Endothelial cell of umbilical vein (primary cell): ENCODE measurements at regions of chr18 and their contacts with region 1.

Region 1: DNA sequence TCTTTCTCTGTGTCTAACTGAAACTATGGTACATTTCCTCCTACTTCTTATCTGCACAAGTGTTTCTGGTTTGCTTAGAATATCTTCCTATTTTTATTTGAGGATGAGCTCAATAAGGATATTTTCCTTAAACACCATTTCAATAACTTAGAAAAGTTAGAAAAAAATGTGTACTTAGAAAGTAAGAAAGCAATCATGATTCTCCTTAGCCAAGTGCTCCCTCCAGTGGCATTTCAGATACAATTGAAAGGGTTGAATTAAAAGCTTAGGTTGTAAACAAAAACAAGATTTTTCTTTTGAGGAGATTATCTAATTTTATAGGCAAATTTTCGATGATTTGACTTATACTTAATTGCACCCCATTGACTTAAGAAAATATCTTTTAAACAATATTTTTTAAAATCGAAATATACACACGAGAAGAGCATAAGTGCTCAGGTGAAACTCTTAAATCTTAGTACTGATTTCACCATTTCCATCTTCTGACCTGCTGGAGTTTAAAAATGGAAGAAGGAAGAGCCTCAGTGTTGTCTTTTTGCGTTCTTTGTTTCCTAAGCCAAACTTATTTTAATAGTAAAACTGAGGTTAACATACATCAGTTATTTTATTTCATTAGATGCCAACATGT is 26.9 kb downstream of the C18orf63 start:
- DNase-seq: peak; percentile 67
- H3K4me3 ChIP-seq: no peak overlapping the region
- H3K27ac ChIP-seq: no peak overlapping the region
- H3K4me1 ChIP-seq: no peaks in the 10 kb centered on the region
- H3K27me3 ChIP-seq: peaks cover 0 to 7% of the 10 kb centered on the region in 2 experiments
- CTCF ChIP-seq: peak; percentile 24 to 25
- POLR2A ChIP-seq: no peak

Region 2: GRCh38 chr18:74081966-74082741 is 260.4 kb before region 1 on chr18:
- CTCF ChIA-PET with region 1: no interaction called
- POLR2A ChIA-PET with region 1: no interaction called
- dilution Hi-C with region 1: no loop called
- intact Hi-C with region 1: loop called (anchors 1 kb)
- DNase-seq: no peak
- H3K4me3 ChIP-seq: no peak overlapping the region
- H3K27ac ChIP-seq: no peak overlapping the region
- H3K4me1 ChIP-seq: no peaks in the 10 kb centered on the region
- H3K27me3 ChIP-seq: no peaks in the 10 kb centered on the region
- CTCF ChIP-seq: no peak
- POLR2A ChIP-seq: no peak

Region 3: GRCh38 chr18:74242438-74243096 is 100.0 kb before region 1 on chr18:
- CTCF ChIA-PET with region 1: interaction called, 17 read pairs
- POLR2A ChIA-PET with region 1: no interaction called
- dilution Hi-C with region 1: no loop called
- intact Hi-C with region 1: loop called (anchors 1 kb)
- DNase-seq: no peak
- H3K4me3 ChIP-seq: no peak overlapping the region
- H3K27ac ChIP-seq: no peak overlapping the region
- H3K4me1 ChIP-seq: no peaks in the 10 kb centered on the region
- H3K27me3 ChIP-seq: no peaks in the 10 kb centered on the region
- CTCF ChIP-seq: no peak
- POLR2A ChIP-seq: no peak

Region 4: DNA sequence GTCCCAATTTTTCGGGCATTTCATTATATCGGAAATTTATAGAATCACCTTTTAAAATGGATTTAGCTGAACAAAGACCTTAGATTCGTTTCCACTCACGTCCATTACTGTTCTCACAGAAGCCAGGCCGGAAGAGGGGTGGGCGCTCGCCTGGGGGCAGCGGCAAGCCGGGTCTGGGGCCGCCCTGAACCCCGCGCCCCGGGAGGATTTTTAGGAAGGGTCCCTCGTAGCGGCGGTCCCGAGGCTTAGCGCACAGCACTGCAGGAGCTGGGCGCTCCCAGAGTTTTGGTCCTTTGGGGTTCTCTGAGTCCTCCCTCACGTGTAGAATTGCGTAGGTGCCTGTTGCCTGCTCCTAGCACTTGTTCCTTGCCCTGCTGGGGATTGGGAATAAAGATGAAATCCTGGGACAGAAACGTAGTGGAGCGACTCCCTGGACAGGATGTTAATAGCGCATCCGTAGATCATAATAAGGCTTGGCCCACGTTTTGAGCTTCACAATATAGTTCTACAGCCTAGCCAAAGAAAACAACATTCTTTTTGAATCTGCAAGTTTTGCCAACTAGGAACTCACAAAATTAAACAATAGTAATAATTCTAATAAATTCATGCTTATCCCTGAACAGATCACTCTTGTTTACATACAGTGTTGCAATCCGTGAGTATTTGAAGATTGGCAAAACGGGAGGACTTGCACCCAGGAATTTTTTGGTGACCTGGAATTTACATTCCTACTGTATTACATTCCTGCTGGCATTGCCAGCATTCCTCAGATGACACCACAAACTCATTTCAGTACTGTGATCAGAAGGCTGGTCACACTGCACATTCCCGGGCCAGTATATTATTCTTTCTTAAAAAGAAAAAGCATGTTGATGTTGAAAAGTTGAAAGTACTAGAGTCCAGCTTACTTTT is 26.0 kb before region 1 on chr18:
- CTCF ChIA-PET with region 1: interaction called, 18 read pairs
- POLR2A ChIA-PET with region 1: no interaction called
- dilution Hi-C with region 1: no loop called
- intact Hi-C with region 1: no loop called
- DNase-seq: no peak
- H3K4me3 ChIP-seq: no peak overlapping the region
- H3K27ac ChIP-seq: no peak overlapping the region
- H3K4me1 ChIP-seq: no peaks in the 10 kb centered on the region
- H3K27me3 ChIP-seq: no peaks in the 10 kb centered on the region
- CTCF ChIP-seq: no peak
- POLR2A ChIP-seq: no peak

Region 5: DNA sequence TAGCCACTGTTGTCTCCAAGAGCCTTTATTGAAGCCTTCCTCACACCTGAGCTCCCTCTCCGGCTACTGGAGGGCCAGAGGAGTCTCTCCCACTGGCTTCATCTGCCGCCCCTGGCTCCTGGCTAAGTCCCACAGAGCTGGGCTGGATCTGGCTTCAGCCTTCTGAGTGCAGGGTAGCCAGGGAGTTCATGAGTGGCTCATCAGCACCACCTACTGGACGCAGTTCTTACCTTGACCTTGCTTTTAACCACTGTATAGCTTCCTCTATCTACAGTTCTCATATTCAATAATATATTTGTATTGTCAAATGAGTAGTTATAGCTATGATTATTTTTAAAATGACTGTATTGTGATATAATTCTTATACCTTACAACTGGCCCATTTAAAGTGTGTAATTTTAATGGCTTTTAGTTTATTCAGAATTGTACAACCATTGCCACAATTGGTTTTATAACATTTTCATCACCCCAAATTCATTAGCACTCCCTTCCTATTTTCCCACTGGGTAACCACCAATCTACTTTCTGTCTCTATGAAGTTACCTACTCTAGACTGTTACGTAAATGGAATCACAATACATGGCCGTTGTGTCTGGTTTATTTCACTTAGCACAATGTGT is 209.5 kb after region 1 on chr18:
- CTCF ChIA-PET with region 1: interaction called, 25 read pairs
- POLR2A ChIA-PET with region 1: no interaction called
- dilution Hi-C with region 1: no loop called
- intact Hi-C with region 1: no loop called
- DNase-seq: peak; percentile 77
- H3K4me3 ChIP-seq: no peak overlapping the region
- H3K27ac ChIP-seq: no peak overlapping the region
- H3K4me1 ChIP-seq: no peaks in the 10 kb centered on the region
- H3K27me3 ChIP-seq: peaks cover 0 to 4% of the 10 kb centered on the region in 2 experiments
- CTCF ChIP-seq: peak; percentile 70 to 83
- POLR2A ChIP-seq: no peak